ENCODE measurements at regions of chr3 and their contacts with region 1.

Region 1: DNA sequence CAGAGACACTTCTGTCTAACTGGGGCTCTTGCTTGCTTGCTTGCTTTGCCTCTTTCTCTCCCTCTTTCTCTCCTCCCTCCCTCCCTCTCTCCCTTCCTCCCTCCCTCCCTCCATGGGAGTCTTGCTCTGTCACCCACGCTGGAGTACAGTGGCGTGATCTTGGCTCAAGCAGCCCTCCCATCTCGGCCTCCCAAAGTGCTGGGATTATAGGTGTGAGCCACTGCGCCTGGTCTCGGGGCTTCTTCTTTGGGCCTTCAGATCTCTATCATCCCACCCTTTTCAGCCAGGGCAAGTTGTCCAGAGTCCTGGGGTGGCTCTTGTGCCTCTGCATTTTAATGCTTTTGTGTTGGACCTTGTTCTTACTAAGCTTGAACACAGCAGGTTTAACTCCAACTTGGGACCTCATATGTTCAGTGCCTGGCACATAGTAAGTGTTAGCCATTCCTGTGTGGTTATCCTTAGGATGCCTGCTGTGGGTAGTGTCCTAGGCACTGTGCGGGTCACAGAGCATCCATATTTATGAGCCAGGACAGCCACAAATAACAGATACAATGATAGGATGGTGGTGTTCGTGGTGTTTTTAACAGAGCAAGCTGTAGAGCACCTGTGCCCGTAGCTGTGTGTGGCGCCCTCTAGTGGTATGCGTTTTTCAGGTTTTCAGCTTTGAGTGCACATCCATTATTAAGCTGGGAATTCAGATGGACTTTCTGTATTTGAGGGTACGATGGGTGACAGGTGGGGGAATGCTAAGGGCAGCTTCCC is 75.1 kb downstream of the CCK start:
- DNase-seq: peak; percentile 79
- ATAC-seq: peak; percentile 78
- H3K4me3 Mint-ChIP-seq: no peak overlapping the region
- H3K27ac Mint-ChIP-seq: no peak overlapping the region
- H3K4me1 Mint-ChIP-seq: peaks cover 13% of the 10 kb centered on the region
- H3K27me3 Mint-ChIP-seq: no peaks in the 10 kb centered on the region
- CTCF ChIP-seq: peak; percentile 81

Region 2: DNA sequence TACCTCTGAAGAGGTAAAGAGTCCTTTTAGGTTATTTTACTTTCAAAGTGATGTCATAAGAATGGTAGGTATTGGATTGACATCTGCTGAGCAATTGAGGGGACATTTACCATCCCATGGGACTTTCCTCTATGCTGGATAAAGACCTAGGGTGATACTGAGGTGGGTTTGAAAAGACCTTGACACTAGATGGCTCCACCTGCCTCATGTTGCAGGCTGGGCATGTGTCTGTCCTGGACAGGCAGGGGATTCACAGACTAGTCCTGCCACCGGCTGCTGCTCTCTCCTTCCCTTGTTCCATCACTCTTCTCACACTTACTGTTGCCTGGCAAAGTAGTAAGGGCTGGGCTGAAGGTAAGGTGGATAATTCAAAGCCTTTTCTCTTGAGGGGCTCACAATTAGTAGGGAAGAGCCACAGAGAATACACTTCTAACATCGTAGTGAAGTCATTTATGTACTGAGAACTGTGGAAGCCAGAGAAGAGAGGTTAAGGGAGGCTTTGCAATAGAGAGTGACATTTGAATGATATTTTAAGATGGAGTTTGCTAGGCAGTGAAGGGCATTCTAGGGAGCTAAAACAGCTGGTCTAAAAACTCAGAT is 72.0 kb before region 1 on chr3:
- CTCF ChIA-PET with region 1: interaction called, 44 read pairs
- POLR2A ChIA-PET with region 1: no interaction called
- intact Hi-C with region 1: loop called (anchors 5 kb)
- DNase-seq: peak; percentile 46
- ATAC-seq: peak; percentile 75
- H3K4me3 Mint-ChIP-seq: no peak overlapping the region
- H3K27ac Mint-ChIP-seq: no peak overlapping the region
- H3K4me1 Mint-ChIP-seq: peaks cover 30% of the 10 kb centered on the region
- H3K27me3 Mint-ChIP-seq: no peaks in the 10 kb centered on the region
- CTCF ChIP-seq: no peak

Region 3: GRCh38 chr3:42169579-42170120 is 21.2 kb before region 1 on chr3:
- CTCF ChIA-PET with region 1: interaction called, 35 read pairs
- POLR2A ChIA-PET with region 1: interaction called, 3 read pairs
- intact Hi-C with region 1: no loop called
- DNase-seq: no peak
- ATAC-seq: no peak
- H3K4me3 Mint-ChIP-seq: no peak overlapping the region
- H3K27ac Mint-ChIP-seq: no peak overlapping the region
- H3K4me1 Mint-ChIP-seq: peaks cover 24% of the 10 kb centered on the region
- H3K27me3 Mint-ChIP-seq: no peaks in the 10 kb centered on the region
- CTCF ChIP-seq: no peak

Region 4: DNA sequence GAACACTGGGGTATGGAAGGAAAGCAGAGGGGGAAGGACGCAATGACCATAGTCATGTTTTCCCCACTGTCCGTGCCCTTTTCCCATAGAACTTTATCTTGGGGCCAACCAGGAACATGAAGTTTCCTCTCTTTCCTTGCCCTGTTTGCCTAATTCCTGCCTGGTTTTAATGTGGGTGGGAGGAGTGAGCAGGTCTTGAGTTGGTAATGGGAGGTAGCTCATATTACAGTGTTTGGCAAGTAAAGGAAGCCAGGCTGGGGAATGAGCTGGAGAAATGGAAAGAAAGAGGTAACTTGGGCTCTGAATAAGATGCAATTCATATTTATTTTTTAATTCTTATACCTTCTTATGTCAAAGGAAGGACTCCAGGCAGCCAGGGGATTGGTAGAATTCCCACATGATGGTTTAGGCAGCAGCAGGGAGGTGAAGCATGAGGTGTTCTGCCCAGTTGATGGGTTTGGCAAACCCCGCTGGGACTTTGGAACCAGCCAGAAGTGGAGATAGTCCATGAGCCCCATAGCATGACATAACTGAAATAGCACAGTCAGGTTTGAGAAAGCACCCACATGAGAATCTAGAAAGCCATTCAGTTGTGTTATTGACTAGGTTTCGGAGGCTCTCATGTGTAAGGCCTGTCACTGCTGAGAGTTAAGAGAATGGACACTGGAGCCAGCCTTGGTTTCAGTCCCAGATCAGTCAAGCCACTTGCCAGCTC is 15.1 kb after region 1 on chr3:
- CTCF ChIA-PET with region 1: interaction called, 35 read pairs
- POLR2A ChIA-PET with region 1: no interaction called
- intact Hi-C with region 1: no loop called
- DNase-seq: no peak
- ATAC-seq: no peak
- H3K4me3 Mint-ChIP-seq: no peak overlapping the region
- H3K27ac Mint-ChIP-seq: no peak overlapping the region
- H3K4me1 Mint-ChIP-seq: no peaks in the 10 kb centered on the region
- H3K27me3 Mint-ChIP-seq: no peaks in the 10 kb centered on the region
- CTCF ChIP-seq: no peak

Region 5: DNA sequence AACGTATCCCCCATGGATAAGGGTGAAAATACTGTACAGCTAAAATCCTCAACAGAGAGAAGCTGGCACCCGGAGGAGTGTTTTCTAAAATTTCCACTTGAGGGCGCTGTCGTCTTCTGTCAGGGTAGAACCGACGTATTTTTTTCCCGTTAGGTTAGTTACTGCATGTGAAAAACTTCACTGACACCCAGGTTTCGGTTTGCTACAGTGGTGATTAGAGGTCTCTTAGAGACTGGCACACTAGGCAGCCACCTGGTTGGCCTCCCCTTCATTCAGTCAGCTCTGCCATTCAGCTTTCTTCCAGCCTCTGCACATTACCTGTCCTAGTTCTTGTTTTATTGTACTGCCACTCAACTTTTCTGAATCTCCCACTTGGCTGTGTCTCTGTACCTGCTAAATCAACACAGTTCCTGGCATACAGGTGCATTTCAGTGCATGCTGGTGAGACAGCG is 56.7 kb after region 1 on chr3:
- CTCF ChIA-PET with region 1: interaction called, 14 read pairs
- POLR2A ChIA-PET with region 1: no interaction called
- intact Hi-C with region 1: no loop called
- DNase-seq: peak; percentile 75
- ATAC-seq: peak; percentile 70
- H3K4me3 Mint-ChIP-seq: no peak overlapping the region
- H3K27ac Mint-ChIP-seq: no peak overlapping the region
- H3K4me1 Mint-ChIP-seq: peaks cover 3% of the 10 kb centered on the region
- H3K27me3 Mint-ChIP-seq: peaks cover 2% of the 10 kb centered on the region
- CTCF ChIP-seq: peak; percentile 94

Region 6: GRCh38 chr3:42402394-42403096 is 211.7 kb after region 1 on chr3:
- CTCF ChIA-PET with region 1: no interaction called
- POLR2A ChIA-PET with region 1: no interaction called
- intact Hi-C with region 1: no loop called
- DNase-seq: no peak
- ATAC-seq: no peak
- H3K4me3 Mint-ChIP-seq: no peak overlapping the region
- H3K27ac Mint-ChIP-seq: no peak overlapping the region
- H3K4me1 Mint-ChIP-seq: peaks cover 13% of the 10 kb centered on the region
- H3K27me3 Mint-ChIP-seq: peaks cover 2% of the 10 kb centered on the region
- CTCF ChIP-seq: no peak